ENCODE measurements at regions of chr22 and their contacts with region 1.

Region 1: DNA sequence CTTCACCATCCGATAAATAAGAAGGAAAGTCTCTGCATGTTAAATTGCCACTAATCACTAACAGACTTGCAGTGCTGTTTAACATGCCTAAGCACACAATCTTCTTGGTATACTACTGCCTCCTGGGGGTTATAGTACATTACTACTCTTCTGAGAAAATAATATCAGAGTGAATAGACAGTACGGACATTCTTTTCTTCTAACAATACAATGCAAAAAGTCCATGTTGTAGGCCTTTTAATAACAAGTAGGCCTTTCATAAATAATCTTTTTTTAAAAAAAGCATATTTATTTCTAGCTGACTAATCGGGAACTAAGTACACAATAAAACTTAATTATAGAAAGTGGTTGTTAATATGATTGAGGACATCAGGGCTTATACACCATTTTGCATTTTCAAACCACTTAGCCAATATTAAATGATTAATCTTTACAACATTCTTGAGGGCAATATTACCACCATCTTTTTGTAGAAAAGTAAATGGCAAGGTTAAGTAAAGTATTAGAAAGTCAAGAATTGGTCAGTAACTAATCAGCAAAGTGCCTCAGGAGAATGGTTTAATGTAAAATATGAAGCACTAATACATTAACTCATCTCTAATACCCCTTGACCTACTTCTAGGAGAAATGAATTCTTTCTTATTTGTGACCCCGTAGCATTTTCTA is 84.7 kb downstream of the TTC28 start:
- DNase-seq: peak; percentile 32
- ATAC-seq: peak; percentile 94
- H3K4me3 ChIP-seq: no peak overlapping the region
- H3K27ac ChIP-seq: no peak overlapping the region
- H3K4me1 ChIP-seq: no peaks in the 10 kb centered on the region; the same call in none of the 2 replicates
- H3K27me3 ChIP-seq: no peaks in the 10 kb centered on the region
- CTCF ChIP-seq: peak; percentile 63; the same call in 1 of the 2 replicates

Region 2: DNA sequence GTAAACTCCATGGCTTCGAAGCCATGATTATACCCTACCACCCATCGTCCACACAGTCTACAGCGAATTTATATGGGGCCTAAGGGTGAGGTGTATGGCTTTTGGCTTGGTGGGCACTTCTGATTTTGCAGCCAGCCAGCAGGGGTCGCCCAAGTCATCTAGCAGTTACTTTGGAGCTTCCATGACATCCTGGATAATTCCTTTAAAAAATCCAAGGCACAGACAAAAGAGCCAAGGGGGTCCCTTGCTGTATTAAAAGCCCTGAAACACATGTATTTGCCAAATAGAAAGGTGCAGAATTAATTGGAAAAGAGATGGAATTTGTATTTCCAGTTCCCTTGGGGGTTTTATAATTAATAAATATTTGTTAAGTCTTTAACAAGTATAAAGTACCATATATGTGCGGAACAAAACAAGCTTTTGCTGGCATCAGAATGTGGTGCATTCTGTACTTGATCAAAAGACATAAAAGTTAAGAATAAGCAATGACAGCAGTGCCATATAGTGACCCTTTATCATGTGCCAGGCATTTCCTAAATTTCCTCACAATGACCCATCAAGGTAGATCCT is 543.1 kb before region 1 on chr22:
- CTCF ChIA-PET with region 1: no interaction called
- POLR2A ChIA-PET with region 1: no interaction called
- in situ Hi-C with region 1: no loop called
- intact Hi-C with region 1: loop called (anchors 5 kb)
- DNase-seq: peak; percentile 18
- ATAC-seq: no peak; the same call in 1 of the 2 replicates
- H3K4me3 ChIP-seq: no peak overlapping the region
- H3K27ac ChIP-seq: no peak overlapping the region
- H3K4me1 ChIP-seq: no peaks in the 10 kb centered on the region
- H3K27me3 ChIP-seq: no peaks in the 10 kb centered on the region
- CTCF ChIP-seq: peak; percentile 91

Measured in Panc1 (cell line).